ENCODE measurements at regions of chr14 and their contacts with region 1.

Region 1: GRCh38 chr14:35292051-35292769 is at the start of gene PSMA6:
- DNase-seq: peak; percentile 97 to 100 (median 99)
- ATAC-seq: peak; percentile 96
- H3K4me3 ChIP-seq: peak within 1 kb of the TSS; percentile 78
- H3K4me3 Mint-ChIP-seq: peak within 1 kb of the TSS; percentile 98
- H3K27ac ChIP-seq: peak within 1 kb of the TSS; percentile 80 to 86
- H3K27ac Mint-ChIP-seq: peak within 1 kb of the TSS; percentile 95
- H3K4me1 ChIP-seq: peaks cover 38% of the 10 kb centered on the region
- H3K4me1 Mint-ChIP-seq: peaks cover 50% of the 10 kb centered on the region
- H3K27me3 ChIP-seq: no peaks in the 10 kb centered on the region
- H3K27me3 Mint-ChIP-seq: no peaks in the 10 kb centered on the region
- CTCF ChIP-seq: no peak
- total RNA-seq, gene PSMA6: 80.8 TPM

Region 2: GRCh38 chr14:34931206-34931605 is 361.0 kb before region 1 on chr14:
- CTCF ChIA-PET with region 1: no interaction called
- POLR2A ChIA-PET with region 1: interaction called, 10 read pairs
- intact Hi-C with region 1: no loop called
- DNase-seq: peak in 12 of 14 experiments; percentile 2 to 91 (median 44)
- ATAC-seq: peak; percentile 91
- H3K4me3 ChIP-seq: peak overlapping the region; percentile 17
- H3K4me3 Mint-ChIP-seq: peak overlapping the region; percentile 26
- H3K27ac ChIP-seq: peak overlapping the region; percentile 80 to 93
- H3K27ac Mint-ChIP-seq: peak overlapping the region; percentile 90
- H3K4me1 ChIP-seq: peaks cover 24% of the 10 kb centered on the region
- H3K4me1 Mint-ChIP-seq: peaks cover 37% of the 10 kb centered on the region
- H3K27me3 ChIP-seq: no peaks in the 10 kb centered on the region
- H3K27me3 Mint-ChIP-seq: no peaks in the 10 kb centered on the region
- CTCF ChIP-seq: no peak

Region 3: DNA sequence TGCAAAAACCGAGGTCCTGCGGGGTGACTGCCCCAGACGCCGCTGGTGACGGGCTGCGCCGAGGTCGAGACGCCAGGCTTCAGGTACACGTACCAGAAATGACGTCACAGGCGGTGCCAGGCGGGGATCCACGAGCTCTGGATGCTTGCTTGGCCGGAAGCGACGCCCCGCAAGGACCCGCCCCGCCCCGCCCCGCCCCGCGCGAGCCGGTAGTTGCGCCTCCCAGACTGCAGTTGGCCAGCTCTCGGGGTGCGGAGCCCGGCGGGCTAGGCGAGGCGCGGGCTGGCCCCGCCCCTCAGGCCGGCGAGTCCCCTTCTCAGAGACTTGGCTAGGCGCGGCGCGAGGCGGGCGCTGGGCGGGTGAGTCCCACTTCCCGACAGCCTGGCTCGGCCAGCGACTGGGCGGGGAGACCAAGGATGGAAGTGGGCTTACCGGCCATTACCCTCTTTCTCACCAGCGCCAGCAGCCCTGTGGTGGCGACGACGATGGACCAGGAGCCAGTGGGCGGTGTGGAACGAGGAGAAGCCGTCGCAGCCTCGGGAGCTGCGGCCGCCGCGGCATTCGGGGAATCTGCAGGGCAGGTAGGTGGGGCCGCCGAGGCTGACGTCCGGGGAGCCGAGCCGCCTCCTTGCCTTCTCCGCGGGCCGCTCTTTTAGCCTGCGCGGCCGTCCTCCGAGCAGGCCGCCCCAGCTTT is 246.0 kb before region 1 on chr14 and contains the start of gene FAM177A1:
- CTCF ChIA-PET with region 1: no interaction called
- POLR2A ChIA-PET with region 1: interaction called, 16 read pairs
- intact Hi-C with region 1: loop called in 1 of 2 experiments (anchors 5 kb)
- DNase-seq: peak; percentile 94 to 100 (median 98)
- ATAC-seq: peak; percentile 83
- H3K4me3 ChIP-seq: peak within 1 kb of the TSS; percentile 68
- H3K4me3 Mint-ChIP-seq: peak within 1 kb of the TSS; percentile 91
- H3K27ac ChIP-seq: peak within 1 kb of the TSS; percentile 96 to 97
- H3K27ac Mint-ChIP-seq: peak within 1 kb of the TSS; percentile 94
- H3K4me1 ChIP-seq: peaks cover 11% of the 10 kb centered on the region
- H3K4me1 Mint-ChIP-seq: peaks cover 36% of the 10 kb centered on the region
- H3K27me3 ChIP-seq: no peaks in the 10 kb centered on the region
- H3K27me3 Mint-ChIP-seq: no peaks in the 10 kb centered on the region
- CTCF ChIP-seq: no peak
- total RNA-seq, gene FAM177A1: 172 to 186 TPM

Region 4: GRCh38 chr14:35140718-35141581 is 151.3 kb before region 1 on chr14:
- CTCF ChIA-PET with region 1: no interaction called
- POLR2A ChIA-PET with region 1: interaction called, 8 read pairs
- intact Hi-C with region 1: loop called in 1 of 2 experiments (anchors 5 kb)
- DNase-seq: peak in 2 of 14 experiments; percentile 33 to 55
- ATAC-seq: peak; percentile 49
- H3K4me3 ChIP-seq: no peak overlapping the region
- H3K4me3 Mint-ChIP-seq: no peak overlapping the region
- H3K27ac ChIP-seq: no peak overlapping the region
- H3K27ac Mint-ChIP-seq: peak overlapping the region; percentile 80
- H3K4me1 ChIP-seq: no peaks in the 10 kb centered on the region
- H3K4me1 Mint-ChIP-seq: peaks cover 28% of the 10 kb centered on the region
- H3K27me3 ChIP-seq: no peaks in the 10 kb centered on the region
- H3K27me3 Mint-ChIP-seq: no peaks in the 10 kb centered on the region
- CTCF ChIP-seq: peak; percentile 73

Region 5: DNA sequence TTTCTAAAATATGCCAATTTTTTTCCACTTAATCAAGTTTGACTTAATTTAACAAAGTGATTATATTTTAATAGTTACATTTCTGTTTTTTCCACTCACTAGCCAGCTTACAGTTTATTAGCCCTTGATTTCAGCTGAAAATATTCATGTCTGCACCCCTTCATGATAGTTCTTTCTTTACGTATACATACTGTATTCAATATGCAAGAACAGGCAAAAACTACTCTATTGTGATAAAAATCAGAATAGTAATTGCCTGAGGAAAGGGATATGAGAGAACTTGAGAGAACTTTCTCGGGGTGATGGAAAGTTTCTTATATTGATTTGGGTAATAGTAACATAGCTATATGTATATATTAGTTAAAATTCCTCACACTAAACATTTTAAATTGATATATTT is 17.4 kb before region 1 on chr14:
- CTCF ChIA-PET with region 1: no interaction called
- POLR2A ChIA-PET with region 1: no interaction called
- intact Hi-C with region 1: no loop called
- DNase-seq: no peak
- ATAC-seq: no peak
- H3K4me3 ChIP-seq: no peak overlapping the region
- H3K4me3 Mint-ChIP-seq: no peak overlapping the region
- H3K27ac ChIP-seq: no peak overlapping the region
- H3K27ac Mint-ChIP-seq: no peak overlapping the region
- H3K4me1 ChIP-seq: no peaks in the 10 kb centered on the region
- H3K4me1 Mint-ChIP-seq: no peaks in the 10 kb centered on the region
- H3K27me3 ChIP-seq: no peaks in the 10 kb centered on the region
- H3K27me3 Mint-ChIP-seq: no peaks in the 10 kb centered on the region
- CTCF ChIP-seq: no peak

Region 6: DNA sequence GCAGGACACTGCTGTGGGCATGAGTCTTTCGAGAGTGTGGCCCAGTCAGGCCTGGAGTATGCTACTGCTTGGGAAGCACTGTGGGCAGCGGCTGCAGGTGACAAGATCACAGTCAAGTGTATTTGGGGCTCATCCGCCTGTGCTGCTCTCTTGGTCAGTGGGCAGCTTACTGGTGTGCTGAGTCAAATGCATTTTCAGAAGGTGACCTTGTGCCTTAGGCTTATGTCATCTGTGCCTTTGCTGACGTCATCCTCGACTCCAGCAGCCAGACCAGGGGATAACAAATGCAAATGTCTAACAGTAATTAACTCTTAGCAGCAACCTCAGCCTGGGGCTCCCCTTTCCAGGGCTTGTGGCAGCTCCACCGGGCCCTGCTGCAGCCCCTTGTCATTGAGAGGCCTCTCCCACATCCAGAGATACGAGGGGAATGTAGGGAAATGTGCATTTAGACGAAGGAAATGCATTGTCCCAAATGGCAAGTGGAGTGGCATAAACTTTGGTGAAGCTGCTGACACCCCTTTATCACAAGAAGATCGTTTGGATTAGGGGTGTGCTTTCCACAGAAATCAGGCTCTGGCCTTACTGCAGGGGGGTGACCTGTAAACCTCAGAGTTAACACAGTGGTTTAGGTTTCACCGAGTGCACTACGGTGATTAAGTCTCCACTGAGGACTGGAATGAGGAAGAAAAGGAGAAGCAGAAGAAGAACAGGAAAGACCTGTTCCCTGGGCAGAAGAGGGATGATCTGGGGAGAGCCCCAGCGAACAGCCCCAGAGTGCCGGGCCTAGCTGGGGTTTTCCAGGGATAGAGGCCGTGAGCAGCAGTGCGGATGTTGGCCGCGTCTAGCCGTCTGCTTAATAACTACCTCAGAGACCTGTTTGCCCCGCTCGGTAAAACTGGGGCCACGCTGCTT is 39.7 kb after region 1 on chr14:
- CTCF ChIA-PET with region 1: no interaction called
- POLR2A ChIA-PET with region 1: interaction called, 16 read pairs
- intact Hi-C with region 1: no loop called
- DNase-seq: peak in 2 of 14 experiments; percentile 59 to 65
- ATAC-seq: no peak
- H3K4me3 ChIP-seq: no peak overlapping the region
- H3K4me3 Mint-ChIP-seq: no peak overlapping the region
- H3K27ac ChIP-seq: peak overlapping the region in 1 of 2 donors; percentile 64
- H3K27ac Mint-ChIP-seq: peak overlapping the region; percentile 78
- H3K4me1 ChIP-seq: peaks cover 31% of the 10 kb centered on the region
- H3K4me1 Mint-ChIP-seq: peaks cover 27% of the 10 kb centered on the region
- H3K27me3 ChIP-seq: no peaks in the 10 kb centered on the region
- H3K27me3 Mint-ChIP-seq: no peaks in the 10 kb centered on the region
- CTCF ChIP-seq: no peak

Region 7: GRCh38 chr14:35503656-35504055 is 211.4 kb after region 1 on chr14:
- CTCF ChIA-PET with region 1: no interaction called
- POLR2A ChIA-PET with region 1: no interaction called
- intact Hi-C with region 1: no loop called
- DNase-seq: no peak
- ATAC-seq: no peak
- H3K4me3 ChIP-seq: no peak overlapping the region
- H3K4me3 Mint-ChIP-seq: no peak overlapping the region
- H3K27ac ChIP-seq: no peak overlapping the region
- H3K27ac Mint-ChIP-seq: no peak overlapping the region
- H3K4me1 ChIP-seq: no peaks in the 10 kb centered on the region
- H3K4me1 Mint-ChIP-seq: no peaks in the 10 kb centered on the region
- H3K27me3 ChIP-seq: peaks cover 0 to 2% of the 10 kb centered on the region in 2 experiments
- H3K27me3 Mint-ChIP-seq: peaks cover 25% of the 10 kb centered on the region
- CTCF ChIP-seq: no peak

Measured in CD4-positive, alpha-beta T cell (primary cell).